ENCODE measurements at regions of chr11 and their contacts with region 1.

Region 1: DNA sequence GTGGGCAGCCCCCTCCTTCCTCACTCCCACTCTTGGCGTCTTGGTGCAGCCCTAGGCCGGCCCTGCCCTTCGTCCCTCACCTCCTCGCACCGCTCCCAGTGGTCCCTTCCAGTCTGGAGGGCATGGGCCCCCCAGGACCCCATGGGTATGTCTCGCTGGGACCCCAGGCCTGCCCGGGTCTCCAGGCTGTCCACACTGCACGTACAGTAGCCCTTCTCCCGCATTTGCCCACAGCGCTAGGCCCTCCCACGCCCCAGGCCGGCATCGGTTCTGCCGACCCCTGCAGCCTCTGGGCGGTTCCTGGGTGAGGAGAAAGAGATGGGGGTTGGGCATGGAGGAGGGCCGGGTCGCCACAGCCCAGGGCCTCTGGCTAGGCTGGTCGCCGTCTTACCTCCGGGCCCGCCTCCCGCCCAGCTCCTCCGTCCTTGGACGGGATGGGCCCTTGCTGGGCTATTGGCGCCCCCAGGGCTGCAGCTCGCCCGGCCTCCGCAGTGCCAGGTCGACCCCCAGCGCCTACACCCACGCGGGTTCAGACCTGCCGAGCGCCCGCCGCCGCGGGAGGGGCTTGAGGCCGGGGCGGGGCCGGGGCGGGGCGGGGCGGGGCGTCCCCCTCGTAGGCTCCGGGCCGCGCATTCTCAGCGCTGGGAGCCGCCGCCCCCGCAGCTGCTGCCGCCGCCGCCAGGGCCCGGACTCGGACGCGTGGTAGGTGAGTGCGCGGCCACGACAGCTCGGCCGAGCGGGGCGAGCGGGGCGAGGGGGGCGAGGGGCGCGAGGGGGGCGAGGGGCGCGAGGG is at the start of gene CD151:
- DNase-seq: peak; percentile 78
- ATAC-seq: peak; percentile 60
- H3K4me3 ChIP-seq: peak within 1 kb of the TSS in 4 of 5 experiments; percentile 31 to 58 (median 54)
- H3K4me3 Mint-ChIP-seq: peak within 1 kb of the TSS; percentile 71
- H3K27ac ChIP-seq: no peak within 1 kb of the TSS
- H3K27ac Mint-ChIP-seq: no peak within 1 kb of the TSS
- H3K4me1 ChIP-seq: peaks cover 57 to 65% of the 10 kb centered on the region in 2 donors
- H3K4me1 Mint-ChIP-seq: peaks cover 47% of the 10 kb centered on the region
- H3K27me3 ChIP-seq: peaks cover 0 to 63% (median 20%) of the 10 kb centered on the region in 4 experiments
- H3K27me3 Mint-ChIP-seq: peaks cover 7% of the 10 kb centered on the region
- CTCF ChIP-seq: no peak
- total RNA-seq, gene CD151: 24.3 and 25.5 TPM in 2 replicates

Region 2: GRCh38 chr11:819129-819931 is 13.2 kb before region 1 on chr11:
- CTCF ChIA-PET with region 1: no interaction called
- POLR2A ChIA-PET with region 1: interaction called, 57 read pairs
- intact Hi-C with region 1: loop called (anchors 1 kb)
- DNase-seq: peak; percentile 96
- ATAC-seq: peak; percentile 81
- H3K4me3 ChIP-seq: peak overlapping the region in 4 of 5 experiments; percentile 58 to 82 (median 77)
- H3K4me3 Mint-ChIP-seq: peak overlapping the region; percentile 92
- H3K27ac ChIP-seq: peak overlapping the region; percentile 68 to 91
- H3K27ac Mint-ChIP-seq: peak overlapping the region; percentile 91
- H3K4me1 ChIP-seq: peaks cover 16 to 26% of the 10 kb centered on the region in 2 donors
- H3K4me1 Mint-ChIP-seq: peaks cover 20% of the 10 kb centered on the region
- H3K27me3 ChIP-seq: no peaks in the 10 kb centered on the region
- H3K27me3 Mint-ChIP-seq: no peaks in the 10 kb centered on the region
- CTCF ChIP-seq: peak; percentile 30